Right cardiac atrium (tissue), 5 donors: ENCODE measurements at regions of chr5 and their contacts with region 1.

Region 1: GRCh38 chr5:56791396-56791795 is 24.0 kb upstream of the MAP3K1 start:
- DNase-seq: no peak
- ATAC-seq: no peak
- H3K4me3 ChIP-seq: no peak overlapping the region
- H3K27ac ChIP-seq: no peak overlapping the region
- H3K4me1 ChIP-seq: no peaks in the 10 kb centered on the region
- H3K27me3 ChIP-seq: no peaks in the 10 kb centered on the region

Region 2: GRCh38 chr5:56739990-56740389 is 51.4 kb before region 1 on chr5:
- intact Hi-C with region 1: loop called in 1 of 4 experiments (anchors 10 kb)
- DNase-seq: no peak
- ATAC-seq: no peak
- H3K4me3 ChIP-seq: no peak overlapping the region
- H3K27ac ChIP-seq: no peak overlapping the region
- H3K4me1 ChIP-seq: peaks cover 3% of the 10 kb centered on the region
- H3K27me3 ChIP-seq: no peaks in the 10 kb centered on the region